ENCODE measurements at regions of chr10 and their contacts with region 1.

Region 1: GRCh38 chr10:14878266-14879054 is at the start of gene SUV39H2:
- DNase-seq: peak; percentile 100
- CTCF ChIP-seq: peak; percentile 12

Region 2: GRCh38 chr10:14889318-14889717 is 10.9 kb after region 1 on chr10:
- CTCF ChIA-PET with region 1: interaction called, 10 read pairs
- POLR2A ChIA-PET with region 1: no interaction called
- DNase-seq: peak; percentile 22
- CTCF ChIP-seq: peak; percentile 3

Measured in GM10248 (cell line).